Panc1 (cell line): ENCODE measurements at regions of chr9 and their contacts with region 1.

Region 1: GRCh38 chr9:96661711-96662110 is 6.6 kb upstream of the PRXL2C start:
- DNase-seq: no peak
- ATAC-seq: no peak
- H3K4me3 ChIP-seq: no peak overlapping the region
- H3K27ac ChIP-seq: no peak overlapping the region
- H3K4me1 ChIP-seq: no peaks in the 10 kb centered on the region
- H3K27me3 ChIP-seq: no peaks in the 10 kb centered on the region
- CTCF ChIP-seq: no peak

Region 2: GRCh38 chr9:96327694-96328352 is 333.9 kb before region 1 on chr9:
- CTCF ChIA-PET with region 1: interaction called, 9 read pairs
- POLR2A ChIA-PET with region 1: no interaction called
- in situ Hi-C with region 1: no loop called
- intact Hi-C with region 1: loop called (anchors 5 kb)
- DNase-seq: no peak
- ATAC-seq: peak; percentile 80
- H3K4me3 ChIP-seq: no peak overlapping the region
- H3K27ac ChIP-seq: no peak overlapping the region
- H3K4me1 ChIP-seq: no peaks in the 10 kb centered on the region
- H3K27me3 ChIP-seq: no peaks in the 10 kb centered on the region
- CTCF ChIP-seq: peak; percentile 81

Region 3: GRCh38 chr9:96599298-96599697 is 62.4 kb before region 1 on chr9:
- CTCF ChIA-PET with region 1: no interaction called
- POLR2A ChIA-PET with region 1: no interaction called
- in situ Hi-C with region 1: no loop called
- intact Hi-C with region 1: no loop called
- DNase-seq: no peak
- ATAC-seq: no peak
- H3K4me3 ChIP-seq: no peak overlapping the region
- H3K27ac ChIP-seq: no peak overlapping the region
- H3K4me1 ChIP-seq: no peaks in the 10 kb centered on the region; the same call in 1 of the 2 replicates
- H3K27me3 ChIP-seq: no peaks in the 10 kb centered on the region
- CTCF ChIP-seq: no peak